Activated B cell treated with CpG ODN at 0.5 μM for 24 hours (primary cell): ENCODE measurements at regions of chr7 and their contacts with region 1.

Region 1: GRCh38 chr7:143287935-143288826 is at the start of gene CASP2:
- DNase-seq: peak; percentile 97
- ATAC-seq: peak; percentile 91
- H3K4me3 Mint-ChIP-seq: peak within 1 kb of the TSS; percentile 96
- H3K27ac Mint-ChIP-seq: peak within 1 kb of the TSS; percentile 89
- H3K4me1 Mint-ChIP-seq: peaks cover 54% of the 10 kb centered on the region
- H3K27me3 Mint-ChIP-seq: no peaks in the 10 kb centered on the region
- CTCF ChIP-seq: no peak
- total RNA-seq, gene CASP2: 59.5 and 62.2 TPM in 2 replicates

Region 2: DNA sequence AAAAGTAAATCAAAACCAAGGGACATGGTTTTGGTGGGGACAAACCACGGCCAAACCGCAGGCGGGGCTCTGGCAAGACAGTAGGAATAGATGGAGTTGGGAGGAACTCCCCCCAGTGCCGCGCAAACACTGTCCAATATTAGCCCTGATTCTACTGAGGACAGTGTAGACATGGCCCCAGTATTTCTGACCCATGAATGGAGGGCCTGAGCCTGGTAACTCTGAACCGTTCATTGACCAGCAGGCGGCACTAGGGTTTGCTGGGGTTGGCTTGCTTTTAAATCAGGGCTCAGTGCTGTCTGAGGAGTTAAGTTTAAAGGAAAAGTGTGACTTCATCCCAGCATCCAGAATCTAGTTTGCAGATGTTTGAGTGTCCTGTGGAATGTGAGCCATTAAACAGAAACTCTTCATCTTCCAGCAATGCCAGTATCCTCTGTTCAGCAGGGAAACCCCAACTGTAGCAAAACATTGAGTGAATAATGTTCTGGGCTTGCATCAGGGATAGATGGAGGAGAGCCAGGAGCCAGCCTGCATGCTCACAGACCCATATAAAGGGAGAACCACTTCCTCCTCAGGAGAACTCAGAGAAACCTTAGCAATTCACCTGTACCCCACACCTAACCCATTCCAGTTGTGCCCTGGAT is 882.9 kb before region 1 on chr7:
- CTCF ChIA-PET with region 1: no interaction called
- POLR2A ChIA-PET with region 1: no interaction called
- intact Hi-C with region 1: no loop called
- DNase-seq: no peak
- ATAC-seq: no peak
- H3K4me3 Mint-ChIP-seq: no peak overlapping the region
- H3K27ac Mint-ChIP-seq: no peak overlapping the region
- H3K4me1 Mint-ChIP-seq: no peaks in the 10 kb centered on the region
- H3K27me3 Mint-ChIP-seq: peaks cover 6% of the 10 kb centered on the region
- CTCF ChIP-seq: no peak

Region 3: GRCh38 chr7:143256932-143257331 is 31.2 kb before region 1 on chr7:
- CTCF ChIA-PET with region 1: no interaction called
- POLR2A ChIA-PET with region 1: interaction called, 5 read pairs
- intact Hi-C with region 1: loop called (anchors 1 kb)
- DNase-seq: no peak
- ATAC-seq: peak; percentile 89
- H3K4me3 Mint-ChIP-seq: no peak overlapping the region
- H3K27ac Mint-ChIP-seq: peak overlapping the region; percentile 85
- H3K4me1 Mint-ChIP-seq: peaks cover 47% of the 10 kb centered on the region
- H3K27me3 Mint-ChIP-seq: no peaks in the 10 kb centered on the region
- CTCF ChIP-seq: no peak

Region 4: GRCh38 chr7:143299840-143300239 is 11.7 kb after region 1 on chr7:
- CTCF ChIA-PET with region 1: interaction called, 4 read pairs
- POLR2A ChIA-PET with region 1: interaction called, 7 read pairs
- intact Hi-C with region 1: loop called (anchors 2 kb)
- DNase-seq: no peak
- ATAC-seq: peak; percentile 66
- H3K4me3 Mint-ChIP-seq: no peak overlapping the region
- H3K27ac Mint-ChIP-seq: no peak overlapping the region
- H3K4me1 Mint-ChIP-seq: peaks cover 32% of the 10 kb centered on the region
- H3K27me3 Mint-ChIP-seq: no peaks in the 10 kb centered on the region
- CTCF ChIP-seq: no peak

Region 5: GRCh38 chr7:143321734-143322133 is 33.6 kb after region 1 on chr7:
- CTCF ChIA-PET with region 1: no interaction called
- POLR2A ChIA-PET with region 1: no interaction called
- intact Hi-C with region 1: no loop called
- DNase-seq: no peak
- ATAC-seq: no peak
- H3K4me3 Mint-ChIP-seq: no peak overlapping the region
- H3K27ac Mint-ChIP-seq: no peak overlapping the region
- H3K4me1 Mint-ChIP-seq: peaks cover 27% of the 10 kb centered on the region
- H3K27me3 Mint-ChIP-seq: no peaks in the 10 kb centered on the region
- CTCF ChIP-seq: no peak

Region 6: DNA sequence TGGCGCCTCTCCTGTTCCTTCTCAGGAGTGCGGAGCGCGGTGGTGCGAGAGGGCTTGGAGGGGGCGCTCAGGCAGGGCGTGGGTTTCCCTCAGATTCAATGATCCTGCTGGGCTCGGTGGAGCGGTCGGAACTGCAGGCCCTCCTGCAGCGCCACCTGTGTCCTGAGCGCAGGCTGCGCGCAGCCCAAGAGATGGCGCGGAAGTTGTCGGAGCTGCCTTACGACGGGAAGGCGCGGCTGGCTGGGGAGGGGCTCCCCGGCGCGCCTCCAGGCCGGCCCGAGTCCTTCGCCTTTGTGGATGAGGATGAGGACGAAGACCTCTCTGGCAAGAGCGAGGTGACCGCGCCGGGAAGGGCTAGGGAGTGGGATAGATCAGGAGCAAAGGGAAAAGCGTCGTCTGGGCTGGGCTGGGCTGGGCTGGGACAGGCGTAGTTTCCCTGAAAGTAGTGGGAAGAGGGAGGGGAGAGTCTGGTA is 57.3 kb after region 1 on chr7:
- CTCF ChIA-PET with region 1: no interaction called
- POLR2A ChIA-PET with region 1: no interaction called
- intact Hi-C with region 1: loop called (anchors 1 kb)
- DNase-seq: no peak
- ATAC-seq: peak; percentile 91
- H3K4me3 Mint-ChIP-seq: peak overlapping the region; percentile 64
- H3K27ac Mint-ChIP-seq: no peak overlapping the region
- H3K4me1 Mint-ChIP-seq: peaks cover 6% of the 10 kb centered on the region
- H3K27me3 Mint-ChIP-seq: peaks cover 27% of the 10 kb centered on the region
- CTCF ChIP-seq: no peak